ENCODE measurements at regions of chr1 and their contacts with region 1.

Region 1: GRCh38 chr1:51296383-51297357 is 33.7 kb downstream of the TTC39A start:
- DNase-seq: peak; percentile 51
- ATAC-seq: peak; percentile 81
- H3K4me3 ChIP-seq: peak overlapping the region; percentile 62; the same call in 1 of the 2 replicates
- H3K27ac ChIP-seq: peak overlapping the region; percentile 23; the same call in 1 of the 2 replicates
- H3K4me1 ChIP-seq: peaks cover 32% of the 10 kb centered on the region
- H3K27me3 ChIP-seq: no peaks in the 10 kb centered on the region; a peak in 1 of 4 replicates
- CTCF ChIP-seq: peak; percentile 92 to 99 (median 97)
- EP300 ChIP-seq: 0 out of 4 replicates have a peak, but pooled peaks of 1 of the 2 experiments have one; percentile 16
- POLR2A ChIP-seq: no peak; the same call in 1 of the 2 replicates
- RAD21 ChIP-seq: peak; percentile 97

Region 2: DNA sequence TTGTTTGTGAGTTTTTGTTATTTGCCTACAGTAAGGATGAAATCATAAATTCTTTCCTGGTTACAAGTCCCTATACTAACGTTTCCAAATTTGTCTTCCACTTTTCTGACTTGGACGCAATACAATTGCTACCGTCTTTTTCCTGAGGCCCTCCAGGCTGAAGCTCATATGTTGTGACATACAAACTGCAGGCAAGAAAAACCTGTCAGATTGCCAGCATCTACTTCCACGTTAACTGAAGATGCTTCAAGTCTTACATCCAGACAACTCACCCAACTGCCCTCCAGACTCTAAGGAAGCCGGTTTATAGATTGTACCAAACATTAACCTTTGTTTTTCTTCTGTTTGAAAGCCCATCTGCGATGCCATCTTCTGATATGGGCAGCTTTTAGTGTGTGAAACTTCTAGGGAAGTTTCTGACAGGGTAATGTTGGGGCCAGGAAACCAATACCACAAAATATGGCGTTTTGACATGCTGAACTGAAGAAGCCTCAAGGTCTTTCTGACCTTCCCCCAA is 82.0 kb before region 1 on chr1:
- CTCF ChIA-PET with region 1: interaction called, 17 read pairs
- POLR2A ChIA-PET with region 1: no interaction called
- RAD21 ChIA-PET with region 1: interaction called, 4 read pairs
- SMC1A ChIA-PET with region 1: interaction called, 4 read pairs
- in situ Hi-C with region 1: no loop called
- intact Hi-C with region 1: no loop called
- DNase-seq: no peak
- ATAC-seq: peak; percentile 79
- H3K4me3 ChIP-seq: no peak overlapping the region
- H3K27ac ChIP-seq: no peak overlapping the region; the same call in 1 of the 2 replicates
- H3K4me1 ChIP-seq: peaks cover 11% of the 10 kb centered on the region
- H3K27me3 ChIP-seq: no peaks in the 10 kb centered on the region
- CTCF ChIP-seq: no peak
- EP300 ChIP-seq: no peak
- POLR2A ChIP-seq: no peak
- RAD21 ChIP-seq: no peak

Measured in GM12878 (cell line).